ENCODE measurements at regions of chr12 and their contacts with region 1.

Region 1: GRCh38 chr12:108856428-108857157 is 790 bp downstream of the SSH1 start:
- DNase-seq: peak; percentile 73
- H3K4me3 ChIP-seq: peak overlapping the region; percentile 83 to 94 (median 91)
- H3K27ac ChIP-seq: peak overlapping the region; percentile 97
- H3K4me1 ChIP-seq: peaks cover 28% of the 10 kb centered on the region
- H3K27me3 ChIP-seq: no peaks in the 10 kb centered on the region
- CTCF ChIP-seq: no peak

Region 2: GRCh38 chr12:108562348-108563135 is 294.1 kb before region 1 on chr12 and contains the start of gene ISCU:
- CTCF ChIA-PET with region 1: no interaction called
- dilution Hi-C with region 1: no loop called
- in situ Hi-C with region 1: no loop called
- intact Hi-C with region 1: loop called (anchors 1 kb)
- DNase-seq: peak; percentile 96
- H3K4me3 ChIP-seq: peak within 1 kb of the TSS; percentile 88
- H3K27ac ChIP-seq: peak within 1 kb of the TSS; percentile 93
- H3K4me1 ChIP-seq: peaks cover 30% of the 10 kb centered on the region
- H3K27me3 ChIP-seq: no peaks in the 10 kb centered on the region
- CTCF ChIP-seq: no peak
- total RNA-seq, gene ISCU: 55.3 to 77.6 TPM

Region 3: GRCh38 chr12:108691175-108691997 is 165.2 kb before region 1 on chr12:
- CTCF ChIA-PET with region 1: no interaction called
- dilution Hi-C with region 1: no loop called
- in situ Hi-C with region 1: no loop called
- intact Hi-C with region 1: loop called (anchors 1 kb)
- DNase-seq: peak; percentile 100
- H3K4me3 ChIP-seq: peak overlapping the region; percentile 1 to 35 (median 6)
- H3K27ac ChIP-seq: peak overlapping the region; percentile 99
- H3K4me1 ChIP-seq: peaks cover 62% of the 10 kb centered on the region
- H3K27me3 ChIP-seq: no peaks in the 10 kb centered on the region
- CTCF ChIP-seq: peak; percentile 41 to 44

Region 4: GRCh38 chr12:108838194-108839017 is 18.2 kb before region 1 on chr12:
- CTCF ChIA-PET with region 1: interaction called, 8 read pairs
- dilution Hi-C with region 1: no loop called
- in situ Hi-C with region 1: no loop called
- intact Hi-C with region 1: loop called (anchors 1 kb)
- DNase-seq: peak; percentile 99
- H3K4me3 ChIP-seq: no peak overlapping the region
- H3K27ac ChIP-seq: peak overlapping the region; percentile 97
- H3K4me1 ChIP-seq: peaks cover 84% of the 10 kb centered on the region
- H3K27me3 ChIP-seq: no peaks in the 10 kb centered on the region
- CTCF ChIP-seq: no peak